Gastrocnemius medialis (tissue), 4 donors: ENCODE measurements at regions of chr2 and their contacts with region 1.

Region 1: GRCh38 chr2:218852911-218853667 is 6.5 kb upstream of the WNT6 start:
- DNase-seq: peak in 1 of 2 donors; percentile 41
- ATAC-seq: peak; percentile 54 to 55
- H3K4me3 ChIP-seq: no peak overlapping the region
- H3K27ac ChIP-seq: no peak overlapping the region
- H3K4me1 ChIP-seq: peaks cover 0 to 9% of the 10 kb centered on the region in 2 donors
- H3K27me3 ChIP-seq: peaks cover 0 to 10% (median 4%) of the 10 kb centered on the region in 3 donors
- CTCF ChIP-seq: peak; percentile 70 to 80 (median 77)
- POLR2A ChIP-seq: no peak

Region 2: DNA sequence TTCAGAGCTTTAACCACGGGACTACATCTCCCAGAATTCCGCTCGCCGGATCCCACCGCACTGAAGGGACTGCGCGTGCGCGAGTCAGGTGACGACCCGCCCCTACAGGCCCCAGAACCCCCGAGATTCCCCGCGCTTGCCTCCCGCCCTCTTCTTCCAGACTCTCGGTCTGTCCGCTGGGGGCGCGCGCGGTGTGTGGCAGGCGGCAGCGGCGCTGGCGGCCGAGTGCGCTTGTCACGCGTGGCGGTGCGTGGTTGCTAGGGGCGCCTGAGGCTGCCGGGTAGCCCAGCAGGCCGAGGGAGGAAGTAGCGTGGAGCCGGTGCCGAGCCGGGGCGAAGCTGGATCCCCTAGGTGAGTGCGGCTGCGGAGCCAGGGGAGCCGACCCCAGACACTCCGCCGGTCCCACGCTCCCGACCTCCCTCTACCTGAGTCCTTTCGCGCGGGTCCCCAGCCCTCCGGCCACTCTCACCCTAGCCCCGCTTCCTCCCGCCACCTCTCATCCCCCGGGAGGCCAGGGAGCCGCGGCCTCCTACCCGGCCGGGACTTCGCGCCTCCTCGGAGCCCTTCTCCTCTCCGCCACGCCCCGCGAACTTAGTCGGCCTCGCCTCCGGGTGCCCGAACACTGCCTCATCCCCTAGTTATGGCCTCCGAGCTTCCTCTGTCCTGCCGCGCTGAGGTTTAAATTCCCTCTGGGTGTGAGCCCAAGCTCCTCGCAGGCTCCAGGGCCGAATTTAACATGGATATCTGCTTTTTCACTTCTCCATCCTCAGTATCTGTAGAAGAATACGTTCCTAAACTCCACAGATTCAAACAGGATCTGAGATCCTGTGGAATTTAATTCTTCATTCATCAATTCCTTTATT is 142.2 kb before region 1 on chr2 and contains the start of gene TTLL4:
- in situ Hi-C with region 1: loop called in 1 of 4 experiments (anchors 5 kb)
- intact Hi-C with region 1: no loop called
- DNase-seq: peak; percentile 96 to 97
- ATAC-seq: peak; percentile 97 to 98
- H3K4me3 ChIP-seq: peak within 1 kb of the TSS; percentile 70 to 90 (median 83)
- H3K27ac ChIP-seq: peak within 1 kb of the TSS; percentile 81 to 92 (median 86)
- H3K4me1 ChIP-seq: peaks cover 9% of the 10 kb centered on the region in 2 donors
- H3K27me3 ChIP-seq: no peaks in the 10 kb centered on the region
- CTCF ChIP-seq: peak; percentile 84 to 95 (median 88)
- POLR2A ChIP-seq: peak; percentile 55 to 69
- total RNA-seq, gene TTLL4: 4.4 to 16.2 (median 6.4) TPM

Region 3: DNA sequence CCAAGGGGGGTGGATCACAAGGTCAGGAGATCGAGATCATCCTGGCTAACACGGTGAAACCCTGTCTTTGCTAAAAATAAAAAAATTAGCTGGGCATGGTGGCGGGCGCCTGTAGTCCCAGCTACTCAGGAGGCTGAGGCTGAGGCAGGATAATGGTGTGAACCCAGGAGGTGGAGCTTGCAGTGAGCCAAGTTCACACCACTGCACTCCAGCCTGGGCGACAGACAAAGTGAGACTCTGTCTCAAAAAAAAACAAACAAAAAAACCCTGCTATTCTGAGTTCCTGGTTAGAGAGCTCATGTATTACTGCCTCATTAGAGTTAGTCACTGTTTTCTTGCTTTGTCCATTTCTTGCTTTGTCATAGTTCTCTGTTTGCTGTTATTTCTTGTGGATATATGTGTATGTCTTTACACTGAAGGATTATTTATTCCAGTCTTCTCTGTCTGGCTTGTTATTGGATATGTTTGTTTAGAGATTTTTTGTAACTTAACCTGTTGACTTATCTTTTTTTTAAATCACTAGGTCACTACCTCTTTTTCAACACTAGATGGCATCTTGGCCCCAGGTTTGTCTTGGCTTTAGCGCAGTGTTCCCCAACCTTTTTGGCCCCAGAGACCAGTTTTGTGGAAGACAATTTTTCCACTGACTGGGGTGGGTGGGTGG is 125.5 kb before region 1 on chr2:
- in situ Hi-C with region 1: loop called in 2 of 4 experiments (anchors 5 kb)
- intact Hi-C with region 1: no loop called
- DNase-seq: no peak
- ATAC-seq: no peak
- H3K4me3 ChIP-seq: no peak overlapping the region
- H3K27ac ChIP-seq: no peak overlapping the region
- H3K4me1 ChIP-seq: peaks cover 0 to 7% of the 10 kb centered on the region in 2 donors
- H3K27me3 ChIP-seq: no peaks in the 10 kb centered on the region
- CTCF ChIP-seq: peak; percentile 39 to 55 (median 50)
- POLR2A ChIP-seq: no peak

Region 4: GRCh38 chr2:218781691-218782527 is 71.2 kb before region 1 on chr2 and contains the start of gene CYP27A1:
- in situ Hi-C with region 1: no loop called
- intact Hi-C with region 1: loop called (anchors 5 kb)
- DNase-seq: peak; percentile 24 to 38
- ATAC-seq: peak; percentile 65 to 81
- H3K4me3 ChIP-seq: peak within 1 kb of the TSS; percentile 75 to 82 (median 78)
- H3K27ac ChIP-seq: peak within 1 kb of the TSS; percentile 84 to 89 (median 86)
- H3K4me1 ChIP-seq: peaks cover 21 to 22% of the 10 kb centered on the region in 2 donors
- H3K27me3 ChIP-seq: no peaks in the 10 kb centered on the region
- CTCF ChIP-seq: no peak
- POLR2A ChIP-seq: peak; percentile 29 to 52
- total RNA-seq, gene CYP27A1: 17.9 to 56.3 (median 26.8) TPM

Region 5: GRCh38 chr2:218898109-218898878 is 45.2 kb after region 1 on chr2:
- in situ Hi-C with region 1: loop called in 1 of 4 experiments (anchors 5 kb)
- intact Hi-C with region 1: loop called (anchors 2 kb)
- DNase-seq: peak in 1 of 2 donors; percentile 40
- ATAC-seq: peak; percentile 57 to 71
- H3K4me3 ChIP-seq: peak overlapping the region in 3 of 4 donors; percentile 8 to 34 (median 25)
- H3K27ac ChIP-seq: no peak overlapping the region
- H3K4me1 ChIP-seq: peaks cover 9% of the 10 kb centered on the region in 2 donors
- H3K27me3 ChIP-seq: peaks cover 64 to 78% (median 68%) of the 10 kb centered on the region in 3 donors
- CTCF ChIP-seq: peak; percentile 83 to 96 (median 92)
- POLR2A ChIP-seq: no peak

Region 6: GRCh38 chr2:218904176-218904575 is 51.1 kb after region 1 on chr2:
- in situ Hi-C with region 1: loop called in 1 of 4 experiments (anchors 5 kb)
- intact Hi-C with region 1: loop called (anchors 2 kb)
- DNase-seq: no peak
- ATAC-seq: no peak
- H3K4me3 ChIP-seq: no peak overlapping the region
- H3K27ac ChIP-seq: no peak overlapping the region
- H3K4me1 ChIP-seq: peaks cover 4% of the 10 kb centered on the region in 2 donors
- H3K27me3 ChIP-seq: peaks cover 13 to 20% (median 17%) of the 10 kb centered on the region in 3 donors
- CTCF ChIP-seq: no peak
- POLR2A ChIP-seq: no peak